Activated CD4-positive, alpha-beta T cell treated with anti-CD3 and anti-CD28 coated beads, Interleukin-2, amount 10 ng/mL, durations not matched to agents 24 days and 14 days (primary cell): ENCODE measurements at regions of chr1 and their contacts with region 1.

Region 1: GRCh38 chr1:53246261-53247134 is 8.2 kb upstream of the MAGOH start:
- DNase-seq: no peak
- H3K4me3 Mint-ChIP-seq: no peak overlapping the region
- H3K27ac Mint-ChIP-seq: no peak overlapping the region
- H3K4me1 Mint-ChIP-seq: no peaks in the 10 kb centered on the region
- H3K27me3 Mint-ChIP-seq: no peaks in the 10 kb centered on the region

Region 2: DNA sequence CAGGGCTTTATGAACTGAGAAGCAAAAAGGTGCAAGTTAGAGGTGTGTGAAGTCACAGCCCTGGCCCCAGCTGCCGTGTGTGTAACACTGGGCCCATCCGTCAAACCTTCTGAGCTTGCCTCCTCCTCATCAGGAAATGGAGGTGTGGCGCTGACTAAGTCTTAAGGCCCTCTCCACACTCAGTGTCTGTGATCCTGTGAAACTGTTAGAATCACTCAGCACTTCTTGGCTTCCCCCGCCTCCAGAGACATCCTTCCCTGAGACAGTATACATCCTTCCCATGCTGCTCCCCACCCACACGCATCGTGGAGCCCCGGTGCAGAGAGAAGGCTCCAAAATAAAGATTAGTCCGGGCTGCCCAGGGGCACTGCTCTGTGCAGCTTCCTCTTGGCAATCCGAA is 48.1 kb after region 1 on chr1:
- intact Hi-C with region 1: loop called (anchors 5 kb)
- DNase-seq: peak; percentile 82
- H3K4me3 Mint-ChIP-seq: peak overlapping the region; percentile 44
- H3K27ac Mint-ChIP-seq: peak overlapping the region; percentile 88
- H3K4me1 Mint-ChIP-seq: peaks cover 41% of the 10 kb centered on the region
- H3K27me3 Mint-ChIP-seq: no peaks in the 10 kb centered on the region

Region 3: DNA sequence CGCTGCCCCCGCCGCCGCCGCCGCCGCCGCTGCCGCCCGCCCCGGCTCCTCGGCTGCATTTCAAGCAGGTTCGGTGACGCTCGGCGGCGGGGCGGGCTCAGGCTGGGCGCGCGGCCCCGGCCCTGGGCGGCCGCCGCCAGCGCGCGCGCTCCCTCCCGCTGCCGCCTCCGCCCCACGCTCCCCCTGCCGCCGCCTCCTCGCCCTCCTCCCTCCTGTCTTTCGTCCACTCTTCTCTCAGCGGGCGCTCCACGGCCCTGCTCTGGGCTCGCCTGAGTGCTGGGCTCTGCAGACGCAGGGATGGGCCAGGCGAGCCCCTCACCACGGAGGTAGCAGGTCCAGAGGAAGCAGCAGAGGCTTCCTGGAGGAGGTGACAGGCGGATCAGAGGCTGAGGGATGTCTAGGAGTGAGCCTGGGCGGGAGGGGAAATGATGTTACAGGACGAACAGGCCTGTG is 81.5 kb after region 1 on chr1 and contains the start of gene LRP8:
- intact Hi-C with region 1: no loop called
- DNase-seq: peak; percentile 95
- H3K4me3 Mint-ChIP-seq: peak within 1 kb of the TSS; percentile 99
- H3K27ac Mint-ChIP-seq: peak within 1 kb of the TSS; percentile 98
- H3K4me1 Mint-ChIP-seq: peaks cover 32% of the 10 kb centered on the region
- H3K27me3 Mint-ChIP-seq: no peaks in the 10 kb centered on the region
- total RNA-seq, gene LRP8: 76.8 and 81.6 TPM in 2 replicates